ENCODE measurements at regions of chr15 and their contacts with region 1.

Region 1: GRCh38 chr15:60255390-60255789 is 142.4 kb downstream of the ANXA2 start:
- DNase-seq: peak; percentile 26
- H3K4me3 Mint-ChIP-seq: no peak overlapping the region
- H3K27ac Mint-ChIP-seq: peak overlapping the region; percentile 7
- H3K4me1 Mint-ChIP-seq: peaks cover 9% of the 10 kb centered on the region
- H3K27me3 Mint-ChIP-seq: peaks cover 45% of the 10 kb centered on the region

Region 2: DNA sequence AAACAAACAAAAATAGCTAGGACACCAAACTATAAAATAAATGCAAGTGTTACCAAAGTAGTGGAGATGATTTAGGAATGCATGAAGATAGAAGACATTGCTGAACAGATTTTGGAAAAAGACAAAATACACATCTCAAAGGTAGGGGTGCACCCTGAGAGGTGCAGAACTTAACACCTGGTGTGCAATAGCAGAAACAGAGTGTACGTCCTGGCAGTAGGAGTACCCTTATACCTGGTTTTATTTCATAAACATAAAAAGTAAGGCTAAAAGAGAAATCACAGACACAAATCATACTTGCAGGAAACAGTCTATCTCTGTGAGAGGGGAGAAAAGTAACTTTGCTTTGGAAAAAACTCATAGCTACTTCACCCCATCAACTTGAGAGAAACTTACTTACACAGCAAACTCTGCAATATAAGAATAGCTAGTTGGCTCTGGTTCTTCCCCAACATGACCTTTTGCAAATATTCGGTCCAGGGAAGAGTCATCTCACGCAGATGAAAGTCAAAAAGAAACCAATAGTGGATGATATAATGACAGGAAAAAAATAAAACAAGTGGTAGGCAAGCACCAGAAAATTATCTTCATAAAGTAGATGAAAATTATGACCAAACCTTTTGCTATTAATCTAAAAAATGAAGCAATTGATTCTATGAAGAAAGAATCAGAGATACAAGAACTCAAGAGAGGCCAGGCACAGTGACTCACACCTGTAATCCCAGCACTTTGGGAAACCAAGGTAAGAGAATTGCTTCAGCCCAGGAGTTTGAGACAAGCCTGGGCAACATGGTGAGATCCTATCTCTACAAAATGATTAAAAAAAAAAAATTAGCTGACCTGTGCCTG is 457.4 kb before region 1 on chr15:
- intact Hi-C with region 1: loop called (anchors 5 kb)
- DNase-seq: no peak
- H3K4me3 Mint-ChIP-seq: peak overlapping the region; percentile 10
- H3K27ac Mint-ChIP-seq: peak overlapping the region; percentile 49
- H3K4me1 Mint-ChIP-seq: peaks cover 52% of the 10 kb centered on the region
- H3K27me3 Mint-ChIP-seq: peaks cover 10% of the 10 kb centered on the region